ENCODE measurements at regions of chr12 and their contacts with region 1.

Region 1: GRCh38 chr12:22631863-22632463 is 7.0 kb downstream of the ETNK1 start:
- H3K4me3 Mint-ChIP-seq: no peak overlapping the region
- H3K27ac Mint-ChIP-seq: peak overlapping the region; percentile 8
- H3K4me1 Mint-ChIP-seq: peaks cover 37% of the 10 kb centered on the region
- H3K27me3 Mint-ChIP-seq: no peaks in the 10 kb centered on the region

Region 2: DNA sequence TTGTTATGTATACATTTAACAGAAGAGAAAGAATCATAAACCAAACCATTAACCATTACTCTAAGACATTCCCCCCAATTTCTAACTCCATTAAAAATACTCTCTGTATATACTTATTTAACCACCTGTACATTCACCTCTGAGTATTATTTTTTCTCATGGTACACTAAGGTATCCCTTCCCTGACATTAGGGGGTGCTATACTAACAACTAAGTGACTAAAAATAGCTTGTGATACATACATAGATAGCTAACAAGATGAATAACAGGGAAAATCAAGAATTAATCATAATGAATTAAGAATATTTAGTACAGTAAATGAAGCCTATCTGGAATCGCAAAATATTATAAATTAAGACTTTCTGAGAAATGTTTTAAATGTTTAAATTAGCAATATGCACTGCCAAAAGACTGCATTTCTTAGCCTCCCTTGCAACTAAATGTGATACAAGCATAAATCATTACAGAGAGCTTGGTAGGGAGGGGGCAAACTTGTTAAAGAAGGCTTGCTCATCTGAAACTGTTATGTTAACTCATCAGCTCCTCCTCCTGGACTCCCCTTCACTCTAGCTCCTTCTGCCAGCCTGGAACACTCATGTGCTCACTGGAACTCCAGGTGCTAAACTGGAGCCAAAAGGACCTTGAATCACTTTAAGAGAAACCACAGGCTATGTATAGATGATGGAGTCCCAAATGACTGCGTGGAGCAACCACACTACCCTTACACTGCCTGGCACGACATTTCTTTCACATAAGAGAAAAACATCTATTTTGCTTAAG is 102.5 kb before region 1 on chr12:
- intact Hi-C with region 1: loop called (anchors 1 kb)
- H3K4me3 Mint-ChIP-seq: no peak overlapping the region
- H3K27ac Mint-ChIP-seq: no peak overlapping the region
- H3K4me1 Mint-ChIP-seq: no peaks in the 10 kb centered on the region
- H3K27me3 Mint-ChIP-seq: no peaks in the 10 kb centered on the region

Region 3: GRCh38 chr12:22648668-22649067 is 16.7 kb after region 1 on chr12:
- intact Hi-C with region 1: no loop called
- H3K4me3 Mint-ChIP-seq: no peak overlapping the region
- H3K27ac Mint-ChIP-seq: no peak overlapping the region
- H3K4me1 Mint-ChIP-seq: peaks cover 15% of the 10 kb centered on the region
- H3K27me3 Mint-ChIP-seq: no peaks in the 10 kb centered on the region

Region 4: DNA sequence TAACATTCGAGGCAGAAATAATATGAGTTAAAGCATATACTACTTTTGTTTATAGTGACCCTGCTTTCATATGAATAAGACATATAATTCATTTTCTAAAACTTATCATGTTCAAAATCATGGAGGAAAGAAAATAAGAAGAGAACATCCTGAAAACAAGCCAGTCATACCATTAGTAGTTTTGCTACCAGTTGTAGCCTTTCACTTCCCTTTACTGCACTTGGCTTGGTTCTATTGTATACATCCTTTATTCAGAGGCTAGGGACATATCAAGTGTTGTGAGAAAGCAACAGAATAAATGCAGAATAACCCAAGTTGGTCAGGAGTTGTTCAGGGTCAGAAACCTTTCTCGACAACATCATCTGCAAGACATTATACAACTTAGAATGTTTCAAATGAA is 718.8 kb after region 1 on chr12:
- intact Hi-C with region 1: no loop called
- H3K4me3 Mint-ChIP-seq: no peak overlapping the region
- H3K27ac Mint-ChIP-seq: no peak overlapping the region
- H3K4me1 Mint-ChIP-seq: no peaks in the 10 kb centered on the region
- H3K27me3 Mint-ChIP-seq: no peaks in the 10 kb centered on the region